ENCODE measurements at regions of chr7 and their contacts with region 1.

Region 1: DNA sequence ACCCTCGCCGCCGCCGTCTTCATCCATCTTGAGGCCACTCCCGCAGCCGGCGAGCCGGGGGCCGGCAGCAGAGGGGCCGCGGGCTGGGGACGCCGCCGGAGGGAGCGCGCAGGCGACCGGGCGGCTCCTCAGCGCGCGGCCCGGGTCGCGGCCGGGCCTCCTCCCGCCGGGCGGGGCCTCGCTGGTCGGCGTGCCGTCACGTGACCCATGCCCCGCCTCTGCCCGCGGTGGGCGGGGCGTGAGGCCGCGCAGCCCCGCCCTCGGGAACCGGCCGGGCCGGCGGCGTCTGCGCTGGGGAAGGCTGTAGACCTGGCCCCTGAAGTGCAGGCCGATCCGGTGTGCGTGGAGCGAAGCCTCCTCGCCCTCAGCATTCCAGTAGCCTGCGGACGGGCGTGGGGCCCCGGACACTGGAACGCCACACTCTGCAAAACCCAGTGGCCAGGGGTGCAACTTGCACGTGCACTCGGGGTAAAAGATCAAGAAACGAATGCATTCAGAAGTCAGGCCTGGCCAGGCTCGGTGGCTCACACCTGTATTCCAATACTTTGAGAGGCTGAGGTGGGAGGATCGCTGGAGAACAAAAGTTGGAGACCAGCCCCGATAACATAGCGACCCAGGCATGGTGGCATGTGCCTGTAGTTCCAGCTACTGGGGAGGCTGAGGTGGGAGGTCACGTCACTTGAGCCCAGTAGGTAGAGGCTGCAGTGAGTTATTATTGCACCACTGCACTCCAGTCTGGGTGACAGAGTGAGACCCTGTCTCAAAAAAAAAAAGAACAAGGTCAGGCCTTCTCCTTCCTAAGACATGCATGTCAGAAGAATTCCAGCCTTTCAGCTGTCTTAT is at the start of gene CYTH3:
- DNase-seq: peak; percentile 69 to 80 (median 77)
- H3K4me3 ChIP-seq: peak within 1 kb of the TSS; percentile 68 to 92 (median 79)
- H3K4me3 Mint-ChIP-seq: peak within 1 kb of the TSS; percentile 90 to 97
- H3K27ac ChIP-seq: no peak within 1 kb of the TSS
- H3K27ac Mint-ChIP-seq: peak within 1 kb of the TSS in 6 of 7 donors; percentile 31 to 81 (median 40)
- H3K4me1 ChIP-seq: peaks cover 17 to 22% of the 10 kb centered on the region in 2 donors
- H3K4me1 Mint-ChIP-seq: peaks cover 19% of the 10 kb centered on the region
- H3K27me3 ChIP-seq: peaks cover 5 to 17% of the 10 kb centered on the region in 2 donors
- H3K27me3 Mint-ChIP-seq: peaks cover 21 to 38% (median 26%) of the 10 kb centered on the region in 3 donors
- CTCF ChIP-seq: no peak
- polyA plus RNA-seq, gene CYTH3: 1.3 to 8.5 (median 1.4) TPM

Region 2: DNA sequence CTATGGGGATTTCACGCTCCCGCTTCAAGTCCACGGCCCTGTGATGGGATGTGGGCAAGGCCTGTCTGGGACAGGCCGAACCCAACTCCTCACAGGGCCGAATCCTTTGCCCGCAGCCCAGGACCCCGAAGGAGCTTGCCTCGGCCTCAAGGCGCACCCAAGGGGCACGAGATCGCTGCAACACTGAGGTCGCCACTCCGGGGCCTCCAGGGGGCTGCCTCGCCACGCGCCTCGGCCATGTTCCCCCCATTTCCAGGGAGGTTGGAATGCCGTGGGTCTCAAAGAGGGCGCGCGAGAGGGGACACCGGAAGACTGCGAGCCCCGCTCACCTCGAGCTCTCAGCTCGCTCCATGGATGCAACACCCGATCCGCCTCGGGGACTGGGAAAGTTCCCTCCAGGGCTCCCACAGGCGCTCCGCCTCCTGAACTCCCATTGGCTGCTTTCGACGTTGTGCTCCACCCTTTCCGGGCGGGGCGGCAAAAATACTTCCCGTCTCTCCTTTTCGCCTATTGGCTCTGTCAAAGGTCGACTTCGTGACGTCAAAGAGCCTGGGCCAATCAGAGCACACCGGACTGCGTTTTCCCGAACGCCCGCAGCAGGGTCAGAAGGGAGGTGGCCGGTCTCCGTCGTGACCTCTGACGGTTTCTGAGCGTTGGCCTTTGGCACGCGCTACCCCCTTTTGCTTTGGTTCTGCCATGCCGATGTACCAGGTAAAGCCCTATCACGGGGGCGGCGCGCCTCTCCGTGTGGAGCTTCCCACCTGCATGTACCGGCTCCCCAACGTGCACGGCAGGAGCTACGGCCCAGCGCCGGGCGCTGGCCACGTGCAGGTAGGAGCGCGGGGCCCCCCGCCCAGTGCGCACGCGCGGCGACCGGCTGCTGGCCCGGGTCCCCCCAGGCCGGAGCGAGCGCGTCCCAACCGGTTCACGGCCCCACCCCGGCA is 263.8 kb before region 1 on chr7 and contains the starts of genes AIMP2 and PMS2:
- intact Hi-C with region 1: loop called in 1 of 2 experiments (anchors 5 kb)
- DNase-seq: peak; percentile 99
- H3K4me3 ChIP-seq: peak within 1 kb of the TSS; percentile 69 to 92 (median 91)
- H3K4me3 Mint-ChIP-seq: peak within 1 kb of the TSS; percentile 85 to 89
- H3K27ac ChIP-seq: peak within 1 kb of the TSS; percentile 87 to 92
- H3K27ac Mint-ChIP-seq: peak within 1 kb of the TSS; percentile 88 to 96 (median 95)
- H3K4me1 ChIP-seq: peaks cover 6 to 12% of the 10 kb centered on the region in 2 donors
- H3K4me1 Mint-ChIP-seq: peaks cover 18% of the 10 kb centered on the region
- H3K27me3 ChIP-seq: no peaks in the 10 kb centered on the region
- H3K27me3 Mint-ChIP-seq: peaks cover 0 to 1% (median 0%) of the 10 kb centered on the region in 3 donors
- CTCF ChIP-seq: no peak
- polyA plus RNA-seq, gene AIMP2: 15.7 to 33.5 (median 32.7) TPM
- polyA plus RNA-seq, gene PMS2: 3.8 to 5.1 (median 4.8) TPM

Region 3: GRCh38 chr7:6130007-6130587 is 142.6 kb before region 1 on chr7:
- intact Hi-C with region 1: no loop called
- DNase-seq: no peak
- H3K4me3 ChIP-seq: no peak overlapping the region
- H3K4me3 Mint-ChIP-seq: no peak overlapping the region
- H3K27ac ChIP-seq: no peak overlapping the region
- H3K27ac Mint-ChIP-seq: no peak overlapping the region
- H3K4me1 ChIP-seq: no peaks in the 10 kb centered on the region
- H3K4me1 Mint-ChIP-seq: no peaks in the 10 kb centered on the region
- H3K27me3 ChIP-seq: no peaks in the 10 kb centered on the region
- H3K27me3 Mint-ChIP-seq: peaks cover 0 to 2% (median 2%) of the 10 kb centered on the region in 3 donors
- CTCF ChIP-seq: no peak

Region 4: GRCh38 chr7:6160191-6160623 is 112.5 kb before region 1 on chr7:
- intact Hi-C with region 1: loop called in 1 of 2 experiments (anchors 10 kb)
- DNase-seq: no peak
- H3K4me3 ChIP-seq: no peak overlapping the region
- H3K4me3 Mint-ChIP-seq: no peak overlapping the region
- H3K27ac ChIP-seq: no peak overlapping the region
- H3K27ac Mint-ChIP-seq: no peak overlapping the region
- H3K4me1 ChIP-seq: no peaks in the 10 kb centered on the region
- H3K4me1 Mint-ChIP-seq: no peaks in the 10 kb centered on the region
- H3K27me3 ChIP-seq: no peaks in the 10 kb centered on the region
- H3K27me3 Mint-ChIP-seq: no peaks in the 10 kb centered on the region
- CTCF ChIP-seq: peak; percentile 16

Region 5: GRCh38 chr7:6232534-6233300 is 40.0 kb before region 1 on chr7:
- intact Hi-C with region 1: loop called in 1 of 2 experiments (anchors 5 kb)
- DNase-seq: peak; percentile 83 to 93 (median 84)
- H3K4me3 ChIP-seq: peak overlapping the region in 2 of 3 experiments; percentile 19 to 63
- H3K4me3 Mint-ChIP-seq: peak overlapping the region; percentile 64 to 81
- H3K27ac ChIP-seq: peak overlapping the region; percentile 20 to 62
- H3K27ac Mint-ChIP-seq: peak overlapping the region; percentile 77 to 93 (median 92)
- H3K4me1 ChIP-seq: peaks cover 53 to 59% of the 10 kb centered on the region in 2 donors
- H3K4me1 Mint-ChIP-seq: peaks cover 61% of the 10 kb centered on the region
- H3K27me3 ChIP-seq: peaks cover 0 to 3% of the 10 kb centered on the region in 2 donors
- H3K27me3 Mint-ChIP-seq: peaks cover 23 to 35% (median 27%) of the 10 kb centered on the region in 3 donors
- CTCF ChIP-seq: no peak

Region 6: GRCh38 chr7:6350433-6351058 is 77.8 kb after region 1 on chr7:
- intact Hi-C with region 1: no loop called
- DNase-seq: peak in 2 of 3 donors; percentile 29 to 56
- H3K4me3 ChIP-seq: peak overlapping the region in 1 of 3 experiments; percentile 53
- H3K4me3 Mint-ChIP-seq: peak overlapping the region; percentile 29 to 50
- H3K27ac ChIP-seq: peak overlapping the region; percentile 61 to 66
- H3K27ac Mint-ChIP-seq: peak overlapping the region; percentile 66 to 90 (median 85)
- H3K4me1 ChIP-seq: peaks cover 65% of the 10 kb centered on the region in 2 donors
- H3K4me1 Mint-ChIP-seq: peaks cover 35% of the 10 kb centered on the region
- H3K27me3 ChIP-seq: no peaks in the 10 kb centered on the region
- H3K27me3 Mint-ChIP-seq: peaks cover 0 to 9% (median 0%) of the 10 kb centered on the region in 3 donors
- CTCF ChIP-seq: no peak

Measured in CD14-positive monocyte (primary cell).